ENCODE measurements at regions of chr5 and their contacts with region 1.

Region 1: GRCh38 chr5:14156650-14157493 is 13.7 kb downstream of the TRIO start:
- DNase-seq: peak; percentile 96
- H3K4me3 ChIP-seq: peak overlapping the region; percentile 47
- H3K27ac ChIP-seq: peak overlapping the region; percentile 96
- H3K27me3 ChIP-seq: no peaks in the 10 kb centered on the region
- CTCF ChIP-seq: no peak

Region 2: GRCh38 chr5:13843175-13843846 is 313.6 kb before region 1 on chr5:
- CTCF ChIA-PET with region 1: no interaction called
- POLR2A ChIA-PET with region 1: no interaction called
- DNase-seq: no peak
- H3K4me3 ChIP-seq: no peak overlapping the region
- H3K27ac ChIP-seq: no peak overlapping the region
- H3K27me3 ChIP-seq: no peaks in the 10 kb centered on the region
- CTCF ChIP-seq: no peak

Region 3: GRCh38 chr5:14142827-14143548 is 13.9 kb before region 1 on chr5 and contains the start of gene TRIO:
- CTCF ChIA-PET with region 1: interaction called, 3 read pairs
- POLR2A ChIA-PET with region 1: interaction called, 30 read pairs
- DNase-seq: peak; percentile 77
- H3K4me3 ChIP-seq: peak within 1 kb of the TSS; percentile 84
- H3K27ac ChIP-seq: peak within 1 kb of the TSS; percentile 98
- H3K27me3 ChIP-seq: no peaks in the 10 kb centered on the region
- CTCF ChIP-seq: peak; percentile 45
- polyA plus RNA-seq, gene TRIO: 268 TPM in 2 replicates

Region 4: DNA sequence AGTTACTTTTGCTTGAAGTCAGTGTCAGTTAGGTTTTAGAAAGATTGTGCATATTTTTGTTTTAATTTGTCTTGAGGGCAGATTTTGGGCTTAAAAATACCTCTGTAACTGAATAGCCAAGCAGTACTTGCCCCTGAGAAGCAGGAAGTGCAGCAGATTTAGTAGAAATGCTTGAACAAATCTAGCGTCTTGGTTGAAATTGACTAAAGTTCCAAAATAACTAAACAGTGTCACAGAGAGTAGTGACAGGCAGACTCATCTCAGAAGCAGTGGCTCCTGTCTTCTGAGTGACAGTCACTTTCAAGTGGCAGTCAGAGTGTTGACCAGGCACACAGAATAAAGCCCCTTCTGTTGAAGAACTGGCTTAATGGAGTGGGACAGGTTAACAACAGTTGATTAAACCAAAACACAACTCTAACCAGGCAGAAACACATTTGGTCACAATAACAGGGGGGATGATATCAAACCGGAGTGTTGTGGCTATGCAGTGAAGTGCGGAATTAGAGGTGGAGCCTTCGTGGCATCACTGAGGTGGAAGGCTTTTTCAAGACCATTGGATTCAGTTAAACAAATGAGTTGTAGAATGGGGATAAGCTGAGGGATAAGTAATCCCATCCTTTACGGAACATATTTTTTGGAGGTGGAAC is 15.4 kb after region 1 on chr5:
- CTCF ChIA-PET with region 1: no interaction called
- POLR2A ChIA-PET with region 1: interaction called, 13 read pairs
- DNase-seq: no peak
- H3K4me3 ChIP-seq: no peak overlapping the region
- H3K27ac ChIP-seq: peak overlapping the region; percentile 68
- H3K27me3 ChIP-seq: no peaks in the 10 kb centered on the region
- CTCF ChIP-seq: no peak

Region 5: GRCh38 chr5:14190194-14191164 is 33.6 kb after region 1 on chr5:
- CTCF ChIA-PET with region 1: no interaction called
- POLR2A ChIA-PET with region 1: interaction called, 15 read pairs
- DNase-seq: peak; percentile 95
- H3K4me3 ChIP-seq: peak overlapping the region; percentile 34
- H3K27ac ChIP-seq: peak overlapping the region; percentile 97
- H3K27me3 ChIP-seq: no peaks in the 10 kb centered on the region
- CTCF ChIP-seq: no peak

Region 6: GRCh38 chr5:14871210-14872069 is 714.6 kb after region 1 on chr5 and contains the start of gene ANKH:
- CTCF ChIA-PET with region 1: no interaction called
- POLR2A ChIA-PET with region 1: no interaction called
- DNase-seq: peak; percentile 16
- H3K4me3 ChIP-seq: peak within 1 kb of the TSS; percentile 79
- H3K27ac ChIP-seq: peak within 1 kb of the TSS; percentile 34
- H3K27me3 ChIP-seq: no peaks in the 10 kb centered on the region
- CTCF ChIP-seq: no peak
- polyA plus RNA-seq, gene ANKH: 14.2 and 14.3 TPM in 2 replicates

Measured in AG04450 (cell line).